K562 (cell line): ENCODE measurements at regions of chr14 and their contacts with region 1.

Region 1: DNA sequence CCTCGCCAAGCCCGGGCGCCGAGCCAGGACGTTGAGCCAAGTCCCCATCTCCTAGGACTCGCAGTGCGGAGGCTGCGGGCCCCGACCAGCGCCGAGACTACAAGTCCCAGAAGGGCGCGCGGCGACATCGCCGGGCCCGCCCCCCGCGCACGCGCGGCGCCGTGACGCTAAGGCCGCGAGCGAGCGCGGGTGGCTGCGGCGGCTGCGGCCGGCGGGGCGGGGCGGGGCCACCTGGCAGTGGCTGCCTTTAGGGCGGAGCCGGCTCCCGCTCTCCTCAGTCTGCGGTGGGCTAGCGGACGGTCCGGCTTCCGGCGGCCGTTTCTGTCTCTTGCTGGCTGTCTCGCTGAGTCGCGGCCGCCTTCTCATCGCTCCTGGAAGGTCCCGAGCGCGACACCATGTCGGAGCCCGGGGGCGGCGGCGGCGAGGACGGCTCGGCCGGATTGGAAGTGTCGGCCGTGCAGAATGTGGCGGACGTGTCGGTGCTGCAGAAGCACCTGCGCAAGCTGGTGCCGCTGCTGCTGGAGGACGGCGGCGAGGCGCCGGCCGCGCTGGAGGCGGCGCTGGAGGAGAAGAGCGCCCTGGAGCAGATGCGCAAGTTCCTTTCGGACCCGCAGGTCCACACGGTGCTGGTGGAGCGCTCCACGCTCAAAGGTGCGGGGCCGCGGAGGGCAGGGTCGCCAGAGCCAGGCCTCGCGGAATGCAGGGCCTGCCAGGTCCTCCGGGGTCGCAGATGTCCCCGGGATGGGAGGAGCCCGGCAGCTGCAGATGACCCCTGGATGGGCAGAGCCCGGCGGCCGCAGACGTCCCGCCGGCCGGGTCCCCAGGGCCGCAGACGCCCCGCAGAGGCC is at the start of gene DYNC1H1:
- DNase-seq: peak; percentile 88 to 93 (median 88)
- ATAC-seq: peak; percentile 87
- H3K4me3 ChIP-seq: peak within 1 kb of the TSS; percentile 96
- H3K27ac ChIP-seq: peak within 1 kb of the TSS; percentile 76
- H3K4me1 ChIP-seq: peaks cover 34 to 39% of the 10 kb centered on the region in 2 experiments
- H3K27me3 ChIP-seq: no peaks in the 10 kb centered on the region
- CTCF ChIP-seq: no peak
- EP300 ChIP-seq: no peak
- POLR2A ChIP-seq: peak; percentile 89
- RAD21 ChIP-seq: no peak
- polyA plus RNA-seq, gene DYNC1H1: 31.9 to 35.9 TPM

Region 2: DNA sequence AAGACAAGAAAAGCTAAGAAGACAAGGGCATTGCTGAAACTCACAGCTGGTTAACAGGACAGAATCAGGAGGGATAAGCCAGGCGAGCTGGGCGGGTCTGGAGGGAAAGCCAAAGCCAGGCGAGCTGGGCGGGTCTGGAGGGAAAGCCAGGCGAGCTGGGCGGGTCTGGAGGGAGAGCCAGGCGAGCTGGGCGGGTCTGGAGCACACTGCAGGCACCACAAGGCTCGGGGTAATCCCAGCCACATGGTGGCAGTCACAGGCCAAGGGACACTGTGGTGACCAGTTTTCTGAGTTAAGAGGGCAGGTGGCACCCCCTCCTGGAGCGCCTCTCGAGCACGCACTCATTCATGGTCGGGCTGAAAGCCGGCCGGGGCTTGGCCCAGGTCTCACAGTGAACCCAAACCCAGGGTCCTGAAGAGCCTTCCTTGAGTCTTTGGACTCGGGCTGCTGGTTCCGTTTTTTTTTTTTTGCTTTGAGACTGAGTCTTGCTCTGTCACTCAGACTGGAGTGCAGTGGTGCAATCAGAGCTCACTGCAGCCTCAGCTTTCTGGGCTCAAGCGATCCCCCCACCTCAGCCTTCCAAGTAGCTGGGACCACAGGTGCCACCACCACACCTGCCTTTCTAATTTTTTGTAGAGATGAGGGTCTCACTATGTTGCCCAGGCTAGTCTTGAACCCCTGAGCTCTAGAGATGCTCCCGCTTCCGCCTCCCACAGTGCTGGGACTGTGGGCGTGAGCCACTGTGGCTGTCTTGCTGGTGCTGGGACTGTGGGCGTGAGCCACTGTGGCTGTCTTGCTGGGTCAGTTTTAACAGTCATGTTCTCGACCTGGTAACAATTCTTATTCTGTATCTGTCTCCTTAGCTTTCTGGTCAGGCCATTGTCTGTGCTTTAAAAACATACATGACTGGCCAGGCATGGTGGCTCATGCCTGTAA is 82.1 kb after region 1 on chr14:
- CTCF ChIA-PET with region 1: interaction called, 5 read pairs
- POLR2A ChIA-PET with region 1: no interaction called
- in situ Hi-C with region 1: no loop called
- intact Hi-C with region 1: loop called (anchors 5 kb)
- DNase-seq: peak; percentile 74 to 83 (median 80)
- ATAC-seq: peak; percentile 100
- H3K4me3 ChIP-seq: no peak overlapping the region
- H3K27ac ChIP-seq: no peak overlapping the region
- H3K4me1 ChIP-seq: peaks cover 0 to 11% of the 10 kb centered on the region in 2 experiments; a peak in 2 of 5 replicates
- H3K27me3 ChIP-seq: no peaks in the 10 kb centered on the region
- CTCF ChIP-seq: peak; percentile 72 to 98 (median 95)
- EP300 ChIP-seq: no peak
- POLR2A ChIP-seq: no peak
- RAD21 ChIP-seq: peak; percentile 51 to 79

Region 3: GRCh38 chr14:102096214-102097114 is 131.9 kb after region 1 on chr14:
- CTCF ChIA-PET with region 1: interaction called, 5 read pairs
- POLR2A ChIA-PET with region 1: interaction called, 3 read pairs
- in situ Hi-C with region 1: no loop called
- intact Hi-C with region 1: loop called (anchors 1 kb)
- DNase-seq: peak; percentile 48 to 86 (median 60)
- ATAC-seq: peak; percentile 81
- H3K4me3 ChIP-seq: no peak overlapping the region
- H3K27ac ChIP-seq: peak overlapping the region; percentile 70; the same call in 2 of the 3 replicates
- H3K4me1 ChIP-seq: peaks cover 27 to 31% of the 10 kb centered on the region in 2 experiments
- H3K27me3 ChIP-seq: no peaks in the 10 kb centered on the region
- CTCF ChIP-seq: peak; percentile 79 to 90 (median 87)
- EP300 ChIP-seq: no peak
- POLR2A ChIP-seq: no peak
- RAD21 ChIP-seq: peak; percentile 75 to 84

Region 4: DNA sequence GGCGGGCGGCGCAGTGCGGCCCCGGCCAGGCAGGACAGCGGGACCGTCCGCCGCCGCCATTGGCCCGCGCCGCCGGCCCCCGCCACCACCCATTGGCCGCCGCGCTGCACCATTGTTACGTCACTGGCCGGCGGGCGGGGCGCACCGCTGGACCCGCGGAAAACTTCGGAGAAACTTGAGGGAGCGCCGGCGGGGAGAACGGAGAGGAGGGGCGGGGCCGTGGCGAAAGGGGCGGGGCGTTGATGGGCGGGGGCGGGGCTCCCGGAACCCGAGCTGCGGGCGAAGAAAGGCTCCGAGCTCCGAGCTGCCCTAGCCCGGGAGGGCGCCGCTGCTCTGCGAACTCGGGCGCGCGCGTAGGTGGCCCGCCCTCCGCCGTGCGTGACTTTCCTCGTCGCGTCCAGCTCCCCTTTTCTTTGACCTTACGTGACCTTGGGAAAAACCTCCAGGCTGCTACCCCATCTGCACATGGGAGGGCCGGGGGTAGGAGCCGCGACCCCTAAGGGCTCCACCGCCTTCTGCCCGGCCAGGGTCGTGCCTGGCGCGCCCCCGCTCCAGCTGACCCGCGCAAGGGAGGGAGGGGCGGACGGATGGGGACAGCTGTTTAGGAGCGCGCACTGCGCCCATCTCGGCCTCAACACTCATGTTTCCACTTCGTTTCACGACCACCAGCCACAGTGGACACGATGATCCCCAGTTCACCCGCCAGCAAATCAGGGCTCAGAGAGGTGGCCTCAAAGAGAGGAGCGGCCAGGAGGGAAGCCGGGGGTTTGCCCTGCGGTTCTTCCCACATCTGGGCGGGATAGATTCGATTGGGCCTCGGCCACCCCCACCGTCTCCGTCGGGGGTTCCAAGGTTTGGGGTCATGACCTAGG is 545.5 kb after region 1 on chr14 and contains the start of gene ANKRD9:
- CTCF ChIA-PET with region 1: no interaction called
- POLR2A ChIA-PET with region 1: no interaction called
- in situ Hi-C with region 1: no loop called
- intact Hi-C with region 1: loop called (anchors 10 kb)
- DNase-seq: peak; percentile 87 to 95 (median 90)
- ATAC-seq: peak; percentile 83
- H3K4me3 ChIP-seq: peak within 1 kb of the TSS; percentile 68
- H3K27ac ChIP-seq: peak within 1 kb of the TSS; percentile 93
- H3K4me1 ChIP-seq: peaks cover 8 to 66% of the 10 kb centered on the region in 2 experiments; a peak in 4 of 5 replicates
- H3K27me3 ChIP-seq: no peaks in the 10 kb centered on the region
- CTCF ChIP-seq: no peak
- EP300 ChIP-seq: no peak
- POLR2A ChIP-seq: no peak
- RAD21 ChIP-seq: no peak
- polyA plus RNA-seq, gene ANKRD9: 0.04 to 0.06 TPM